ENCODE measurements at regions of chr10 and their contacts with region 1.

Region 1: DNA sequence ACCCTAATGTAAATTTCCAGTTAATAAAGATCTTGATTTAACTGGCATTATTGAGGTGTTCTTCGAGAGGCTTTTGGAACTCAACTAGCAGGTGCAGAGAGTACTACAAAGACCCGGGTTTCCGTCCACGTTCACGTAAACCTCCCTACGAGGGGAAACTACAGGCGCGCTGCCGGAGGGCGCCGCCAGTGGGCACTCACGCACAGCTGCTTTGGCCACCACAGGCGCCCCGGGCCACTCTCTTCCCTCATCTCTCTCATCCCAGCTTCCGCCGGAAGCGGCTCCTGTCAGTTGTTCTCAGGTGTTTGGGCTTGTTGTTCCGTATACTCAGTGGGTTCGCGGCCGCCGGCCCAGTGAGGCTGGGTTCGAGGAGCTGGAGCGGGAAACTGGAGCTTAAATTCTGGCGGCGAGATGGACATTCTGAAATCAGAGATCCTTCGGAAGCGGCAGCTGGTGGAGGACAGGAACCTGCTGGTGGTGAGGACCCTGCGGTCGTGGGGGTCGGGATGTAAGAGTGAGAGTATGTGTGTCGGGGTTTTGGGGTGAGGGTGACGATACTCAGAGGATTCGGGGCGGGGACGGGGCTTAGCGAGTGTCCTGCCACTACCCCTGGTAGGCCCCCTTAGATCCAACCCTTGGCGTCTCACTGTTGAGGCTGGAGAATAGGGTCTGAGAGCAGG is at the start of gene PRPF18:
- DNase-seq: peak; percentile 93
- H3K4me3 Mint-ChIP-seq: peak within 1 kb of the TSS; percentile 99
- H3K27ac Mint-ChIP-seq: peak within 1 kb of the TSS; percentile 100
- H3K4me1 Mint-ChIP-seq: peaks cover 6% of the 10 kb centered on the region
- H3K27me3 Mint-ChIP-seq: peaks cover 22% of the 10 kb centered on the region
- CTCF ChIP-seq: peak; percentile 93
- total RNA-seq, gene PRPF18: 27.8 and 31.6 TPM in 2 replicates

Region 2: GRCh38 chr10:13528875-13529713 is 57.7 kb before region 1 on chr10 and contains the start of gene BEND7:
- CTCF ChIA-PET with region 1: interaction called, 10 read pairs
- POLR2A ChIA-PET with region 1: interaction called, 17 read pairs
- intact Hi-C with region 1: loop called (anchors 5 kb)
- DNase-seq: no peak
- H3K4me3 Mint-ChIP-seq: peak within 1 kb of the TSS; percentile 69
- H3K27ac Mint-ChIP-seq: peak within 1 kb of the TSS; percentile 40
- H3K4me1 Mint-ChIP-seq: peaks cover 21% of the 10 kb centered on the region
- H3K27me3 Mint-ChIP-seq: no peaks in the 10 kb centered on the region
- CTCF ChIP-seq: no peak
- total RNA-seq, gene BEND7: 12.4 and 17.2 TPM in 2 replicates

Region 3: DNA sequence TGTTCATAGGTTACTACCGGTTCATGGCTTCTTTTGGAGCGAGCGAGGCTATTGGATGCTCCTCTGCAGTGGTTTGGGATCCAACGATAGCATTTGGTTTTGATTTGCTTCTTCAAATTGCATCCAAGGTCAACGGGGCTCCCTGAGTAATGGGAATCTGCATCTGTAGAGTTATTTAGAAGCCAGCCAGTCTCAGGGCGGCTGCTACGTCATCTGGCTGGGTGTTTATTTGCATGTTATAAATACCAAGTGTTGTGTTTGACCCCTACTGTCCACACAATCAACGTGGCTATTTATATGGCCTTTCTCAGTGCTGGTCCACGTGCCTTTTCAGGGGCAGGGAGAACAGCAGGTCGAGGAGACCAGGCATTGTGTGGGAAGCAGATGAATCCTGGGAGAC is 137.7 kb after region 1 on chr10:
- CTCF ChIA-PET with region 1: no interaction called
- POLR2A ChIA-PET with region 1: no interaction called
- intact Hi-C with region 1: no loop called
- DNase-seq: no peak
- H3K4me3 Mint-ChIP-seq: no peak overlapping the region
- H3K27ac Mint-ChIP-seq: no peak overlapping the region
- H3K4me1 Mint-ChIP-seq: no peaks in the 10 kb centered on the region
- H3K27me3 Mint-ChIP-seq: no peaks in the 10 kb centered on the region
- CTCF ChIP-seq: no peak

Region 4: DNA sequence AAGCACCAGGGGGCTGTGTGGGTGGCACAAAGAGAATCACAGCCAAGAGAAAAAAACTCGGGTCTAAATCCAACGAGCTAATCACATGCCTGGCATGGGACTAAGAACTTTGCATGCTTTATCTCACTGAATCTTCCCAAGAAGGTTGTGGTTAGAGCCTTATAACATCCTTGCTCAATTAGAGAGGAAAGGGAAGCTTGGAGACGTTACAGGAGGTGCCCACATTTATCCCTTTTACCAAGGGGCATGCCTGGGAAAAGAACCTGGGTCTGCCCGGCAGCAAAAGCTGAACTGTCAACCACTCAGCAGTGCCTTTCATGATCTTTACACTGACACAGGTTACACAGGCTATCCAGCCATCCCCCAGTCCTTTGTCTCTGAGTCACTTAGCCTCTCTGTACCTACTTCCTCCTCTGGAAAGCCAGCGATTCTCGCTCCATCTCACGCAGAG is 190.1 kb after region 1 on chr10:
- CTCF ChIA-PET with region 1: interaction called, 3 read pairs
- POLR2A ChIA-PET with region 1: interaction called, 3 read pairs
- intact Hi-C with region 1: loop called (anchors 2 kb)
- DNase-seq: peak; percentile 17
- H3K4me3 Mint-ChIP-seq: no peak overlapping the region
- H3K27ac Mint-ChIP-seq: no peak overlapping the region
- H3K4me1 Mint-ChIP-seq: peaks cover 18% of the 10 kb centered on the region
- H3K27me3 Mint-ChIP-seq: no peaks in the 10 kb centered on the region
- CTCF ChIP-seq: no peak

Region 5: GRCh38 chr10:13930120-13930519 is 343.3 kb after region 1 on chr10:
- CTCF ChIA-PET with region 1: no interaction called
- POLR2A ChIA-PET with region 1: no interaction called
- intact Hi-C with region 1: no loop called
- DNase-seq: no peak
- H3K4me3 Mint-ChIP-seq: no peak overlapping the region
- H3K27ac Mint-ChIP-seq: no peak overlapping the region
- H3K4me1 Mint-ChIP-seq: no peaks in the 10 kb centered on the region
- H3K27me3 Mint-ChIP-seq: no peaks in the 10 kb centered on the region
- CTCF ChIP-seq: no peak